SK-N-SH (cell line): ENCODE measurements at regions of chr9 and their contacts with region 1.

Region 1: GRCh38 chr9:97900738-97901565 is 21.3 kb downstream of the TRMO start:
- DNase-seq: peak; percentile 61
- H3K4me3 ChIP-seq: no peak overlapping the region; a peak in 1 of 4 replicates
- H3K27ac ChIP-seq: no peak overlapping the region
- H3K4me1 ChIP-seq: no peaks in the 10 kb centered on the region
- H3K27me3 ChIP-seq: no peaks in the 10 kb centered on the region
- CTCF ChIP-seq: peak; percentile 93
- EP300 ChIP-seq: no peak
- RAD21 ChIP-seq: peak; percentile 70

Region 2: DNA sequence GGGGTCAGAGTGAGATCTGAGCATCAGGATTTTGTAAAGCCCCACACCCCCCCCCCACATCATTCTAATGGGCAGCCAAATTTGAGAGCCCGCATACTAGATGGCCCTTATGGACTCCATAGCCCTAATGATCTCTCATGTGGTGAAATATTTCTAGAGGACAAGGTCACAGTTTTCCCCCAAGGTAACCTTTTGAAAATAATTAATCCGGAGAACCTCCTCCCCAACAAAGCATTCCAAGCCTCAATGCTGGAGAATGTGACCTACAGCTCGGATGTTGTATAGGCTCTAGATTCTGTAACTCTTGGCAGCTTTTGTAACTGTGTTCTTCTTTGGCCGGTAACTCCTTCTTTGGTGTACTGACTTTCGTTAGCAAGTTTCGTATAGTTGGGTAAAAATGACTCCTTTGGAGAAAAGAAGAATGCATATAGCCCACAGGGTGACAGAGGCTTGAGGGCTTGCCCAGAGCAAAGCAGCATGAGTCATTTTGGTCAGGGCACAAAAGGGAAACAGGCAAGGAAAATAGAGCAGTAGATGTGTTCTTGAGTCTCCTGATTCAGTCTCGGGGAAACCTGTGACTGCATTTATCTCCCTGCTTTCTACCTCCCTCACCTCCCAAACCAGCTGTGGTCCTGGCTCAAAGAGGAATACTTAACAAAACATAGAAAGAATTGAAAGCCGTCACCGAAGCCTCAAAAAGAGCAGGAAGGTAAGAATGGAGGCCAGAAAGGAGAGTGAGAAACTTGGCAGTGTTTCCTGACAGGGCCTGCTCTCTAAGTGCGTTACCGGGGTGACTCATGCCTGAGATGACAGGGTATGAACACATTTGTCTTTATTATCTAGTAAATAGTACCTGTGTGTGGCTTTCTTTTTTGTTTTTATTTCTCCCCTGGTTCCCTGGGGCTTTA is 197.3 kb before region 1 on chr9:
- CTCF ChIA-PET with region 1: interaction called, 19 read pairs
- POLR2A ChIA-PET with region 1: no interaction called
- DNase-seq: peak; percentile 20
- H3K4me3 ChIP-seq: peak overlapping the region in 1 of 2 experiments; percentile 40; a peak in 1 of 4 replicates
- H3K27ac ChIP-seq: peak overlapping the region; percentile 73 to 83
- H3K4me1 ChIP-seq: peaks cover 7 to 11% of the 10 kb centered on the region in 2 experiments; a peak in 2 of 4 replicates
- H3K27me3 ChIP-seq: no peaks in the 10 kb centered on the region
- CTCF ChIP-seq: no peak
- EP300 ChIP-seq: 0 out of 4 replicates have a peak, but pooled peaks of 1 of the 2 experiments have one; percentile 29
- RAD21 ChIP-seq: no peak

Region 3: GRCh38 chr9:97866848-97867247 is 34.1 kb before region 1 on chr9:
- CTCF ChIA-PET with region 1: interaction called, 19 read pairs
- POLR2A ChIA-PET with region 1: no interaction called
- DNase-seq: no peak
- H3K4me3 ChIP-seq: no peak overlapping the region
- H3K27ac ChIP-seq: no peak overlapping the region
- H3K4me1 ChIP-seq: no peaks in the 10 kb centered on the region
- H3K27me3 ChIP-seq: peaks cover 5% of the 10 kb centered on the region; the same call in 1 of the 2 replicates
- CTCF ChIP-seq: no peak
- EP300 ChIP-seq: no peak
- RAD21 ChIP-seq: no peak

Region 4: DNA sequence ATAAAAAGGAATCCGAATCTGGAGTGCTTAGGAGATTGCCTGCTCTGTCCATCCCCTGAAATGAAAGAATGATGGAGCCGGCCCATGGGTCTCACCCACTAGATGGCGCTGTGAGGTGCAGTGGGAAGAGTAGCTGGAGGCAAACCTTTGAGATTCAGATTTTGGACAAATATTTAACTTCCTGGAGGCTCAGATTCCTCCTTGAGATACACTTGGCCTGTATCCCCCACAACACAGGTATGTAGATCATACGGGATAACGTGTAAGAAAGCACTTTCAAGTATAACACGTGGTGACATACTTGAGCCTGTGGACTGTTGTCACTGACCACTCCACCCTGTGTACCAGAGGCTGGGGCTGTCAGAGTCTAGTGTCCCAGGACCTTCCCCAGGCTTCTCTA is 10.9 kb before region 1 on chr9:
- CTCF ChIA-PET with region 1: interaction called, 53 read pairs
- POLR2A ChIA-PET with region 1: no interaction called
- DNase-seq: peak; percentile 46
- H3K4me3 ChIP-seq: no peak overlapping the region
- H3K27ac ChIP-seq: no peak overlapping the region
- H3K4me1 ChIP-seq: no peaks in the 10 kb centered on the region
- H3K27me3 ChIP-seq: no peaks in the 10 kb centered on the region; the same call in 1 of the 2 replicates
- CTCF ChIP-seq: peak; percentile 63
- EP300 ChIP-seq: no peak
- RAD21 ChIP-seq: no peak; the same call in 1 of the 2 replicates

Region 5: GRCh38 chr9:97911970-97912369 is 11.0 kb after region 1 on chr9:
- CTCF ChIA-PET with region 1: interaction called, 21 read pairs
- POLR2A ChIA-PET with region 1: no interaction called
- DNase-seq: no peak
- H3K4me3 ChIP-seq: no peak overlapping the region
- H3K27ac ChIP-seq: no peak overlapping the region
- H3K4me1 ChIP-seq: no peaks in the 10 kb centered on the region
- H3K27me3 ChIP-seq: no peaks in the 10 kb centered on the region
- CTCF ChIP-seq: no peak
- EP300 ChIP-seq: no peak
- RAD21 ChIP-seq: no peak